ENCODE measurements at regions of chr18 and their contacts with region 1.

Region 1: DNA sequence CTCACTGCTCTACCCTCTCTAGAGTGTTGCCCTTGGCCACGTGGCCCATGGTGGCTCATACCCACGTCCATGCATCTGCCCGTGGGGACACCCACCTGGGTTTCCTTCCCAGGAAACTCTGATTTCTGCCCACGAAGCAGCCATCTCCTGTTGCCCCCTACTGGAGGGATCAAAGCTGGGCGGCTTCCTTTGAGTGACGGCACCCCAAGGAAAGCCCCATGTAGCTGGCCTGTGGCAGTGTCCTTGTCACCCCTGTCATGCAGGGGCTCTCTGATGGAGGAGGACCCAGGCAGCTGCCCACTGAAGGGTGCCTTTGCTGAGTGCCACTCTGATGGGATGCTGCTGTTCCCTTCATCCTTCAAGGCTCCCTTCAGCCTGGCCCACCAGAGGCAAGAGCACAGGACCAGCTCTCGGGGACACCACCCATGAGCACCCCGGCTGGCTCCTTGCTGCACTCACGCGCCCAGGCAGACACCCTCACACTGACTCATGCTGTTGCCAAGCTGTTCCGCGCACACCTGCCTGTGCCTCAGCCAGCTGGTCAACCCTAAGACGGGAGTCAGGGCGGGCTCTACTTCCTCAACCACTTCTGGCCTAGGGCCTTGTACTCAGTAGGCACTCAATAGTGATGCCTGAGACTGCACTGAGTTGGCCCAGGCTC is 101.1 kb downstream of the CTIF start:
- DNase-seq: no peak
- H3K4me3 ChIP-seq: no peak overlapping the region
- H3K27ac ChIP-seq: no peak overlapping the region
- H3K4me1 ChIP-seq: peaks cover 3 to 8% (median 6%) of the 10 kb centered on the region in 4 experiments; a peak in 4 of 7 replicates
- H3K27me3 ChIP-seq: no peaks in the 10 kb centered on the region; a peak in 1 of 7 replicates
- CTCF ChIP-seq: peak; percentile 55 to 60 (median 60)
- EP300 ChIP-seq: no peak
- POLR2A ChIP-seq: no peak
- RAD21 ChIP-seq: peak; percentile 60 to 71

Region 2: DNA sequence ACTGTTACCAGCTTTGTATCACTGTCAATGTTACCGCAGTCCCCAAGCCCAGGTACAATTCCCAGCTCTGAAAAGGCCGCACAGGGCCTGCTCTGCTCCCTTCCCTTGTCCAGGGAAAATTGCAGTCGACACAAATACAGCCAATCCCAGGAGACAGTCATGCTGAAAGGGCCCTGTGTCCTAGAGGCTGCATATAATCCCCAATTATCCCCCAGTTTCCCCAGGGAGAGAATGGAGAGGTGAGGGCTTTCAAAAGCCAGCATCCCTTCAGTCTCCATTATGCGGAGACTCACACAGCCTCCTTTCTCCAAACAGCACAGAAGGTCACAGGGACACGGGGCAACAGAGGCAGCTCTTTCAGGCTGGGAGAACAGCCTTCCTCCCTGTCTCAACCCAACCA is 118.2 kb before region 1 on chr18:
- CTCF ChIA-PET with region 1: interaction called, 10 read pairs
- POLR2A ChIA-PET with region 1: no interaction called
- DNase-seq: no peak
- H3K4me3 ChIP-seq: no peak overlapping the region
- H3K27ac ChIP-seq: no peak overlapping the region
- H3K4me1 ChIP-seq: no peaks in the 10 kb centered on the region
- H3K27me3 ChIP-seq: no peaks in the 10 kb centered on the region
- CTCF ChIP-seq: no peak
- EP300 ChIP-seq: no peak
- POLR2A ChIP-seq: no peak
- RAD21 ChIP-seq: no peak

Region 3: GRCh38 chr18:48613589-48614404 is 26.1 kb before region 1 on chr18:
- CTCF ChIA-PET with region 1: interaction called, 72 read pairs
- POLR2A ChIA-PET with region 1: no interaction called
- DNase-seq: peak in 1 of 2 experiments; percentile 61
- H3K4me3 ChIP-seq: no peak overlapping the region
- H3K27ac ChIP-seq: no peak overlapping the region
- H3K4me1 ChIP-seq: peaks cover 4 to 16% (median 11%) of the 10 kb centered on the region in 4 experiments
- H3K27me3 ChIP-seq: no peaks in the 10 kb centered on the region
- CTCF ChIP-seq: no peak
- EP300 ChIP-seq: no peak
- POLR2A ChIP-seq: no peak
- RAD21 ChIP-seq: no peak

Region 4: GRCh38 chr18:48622911-48623431 is 16.9 kb before region 1 on chr18:
- CTCF ChIA-PET with region 1: interaction called, 30 read pairs
- POLR2A ChIA-PET with region 1: interaction called, 4 read pairs
- DNase-seq: no peak
- H3K4me3 ChIP-seq: no peak overlapping the region
- H3K27ac ChIP-seq: no peak overlapping the region; the same call in 1 of the 2 replicates
- H3K4me1 ChIP-seq: peaks cover 0 to 7% (median 3%) of the 10 kb centered on the region in 4 experiments; a peak in 5 of 7 replicates
- H3K27me3 ChIP-seq: no peaks in the 10 kb centered on the region
- CTCF ChIP-seq: no peak
- EP300 ChIP-seq: no peak
- POLR2A ChIP-seq: no peak
- RAD21 ChIP-seq: no peak

Region 5: DNA sequence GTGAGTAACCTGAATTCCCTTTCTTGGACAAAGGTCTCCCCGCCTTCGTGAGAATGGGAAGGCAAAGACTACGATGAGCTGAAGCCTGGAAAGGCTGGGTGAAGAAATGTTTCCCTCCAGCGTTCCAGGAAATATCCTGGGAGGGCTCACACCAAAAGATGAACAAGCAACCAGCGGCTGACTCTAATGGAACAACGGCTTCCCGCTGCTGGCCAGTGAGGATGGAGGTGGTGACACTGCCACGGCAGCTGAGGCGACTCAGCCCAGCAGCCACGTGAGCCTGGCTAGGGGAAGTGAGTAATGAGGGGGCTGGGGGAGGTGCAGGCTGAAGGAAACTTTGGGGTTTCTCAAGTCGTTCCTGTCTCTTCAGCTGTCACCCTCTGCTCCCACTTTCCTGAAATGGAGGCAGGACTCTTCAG is 415.9 kb after region 1 on chr18:
- CTCF ChIA-PET with region 1: no interaction called
- POLR2A ChIA-PET with region 1: no interaction called
- DNase-seq: no peak
- H3K4me3 ChIP-seq: no peak overlapping the region
- H3K27ac ChIP-seq: no peak overlapping the region
- H3K4me1 ChIP-seq: no peaks in the 10 kb centered on the region
- H3K27me3 ChIP-seq: no peaks in the 10 kb centered on the region
- CTCF ChIP-seq: no peak
- EP300 ChIP-seq: no peak
- POLR2A ChIP-seq: no peak
- RAD21 ChIP-seq: no peak

Measured in H1 (cell line).